Activated T-helper 1 cell treated with anti-CD3 and anti-CD28 coated beads, Interleukin-12 subunit alpha, Interleukin-12 subunit beta, Interleukin-2, Interleukin-4 antibody, amounts not matched to agents 30 ng/mL and 10 ng/mL and 1 ng/mL, durations not matched to agents 14 hours and 24 hours and 36 hours (primary cell): ENCODE measurements at regions of chr9 and their contacts with region 1.

Region 1: DNA sequence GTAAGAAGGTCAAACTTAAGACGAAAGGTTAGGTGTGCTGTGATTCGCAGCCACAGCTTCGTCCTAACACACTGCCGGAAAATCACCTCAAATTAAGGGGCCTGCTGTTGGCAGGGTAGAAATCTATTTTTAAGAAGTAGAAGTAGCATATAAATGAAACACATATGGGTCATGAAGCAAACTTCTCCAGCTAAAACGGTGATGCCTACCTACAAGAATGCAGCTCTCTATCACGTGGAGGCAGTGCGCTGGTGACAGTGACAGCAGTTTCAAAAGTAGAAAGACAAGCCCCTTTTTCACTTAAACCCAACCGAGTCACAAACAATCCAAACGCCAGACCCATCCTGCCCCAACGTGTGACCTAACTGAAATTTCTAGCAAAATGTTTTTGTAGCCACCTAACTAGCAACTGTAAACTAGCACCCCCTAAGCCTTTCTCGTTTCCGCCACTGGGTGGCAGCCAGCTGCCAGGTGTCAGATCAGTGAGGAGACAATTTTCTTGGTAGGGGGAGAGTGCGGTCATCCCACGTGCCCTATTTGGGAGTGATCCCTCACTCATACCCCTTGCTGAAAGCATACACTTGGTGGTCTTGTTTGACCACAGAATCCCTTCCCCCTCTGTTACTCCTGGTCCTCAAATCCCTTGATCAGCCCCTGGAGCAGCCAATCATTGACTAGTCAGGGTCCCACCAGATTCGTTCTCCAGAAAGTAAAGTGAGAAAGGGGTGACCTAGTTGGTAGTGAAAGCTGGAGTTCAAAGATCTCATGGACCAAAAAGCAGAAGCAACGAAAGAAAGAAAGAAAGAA is 71.8 kb upstream of the MAMDC2 start:
- DNase-seq: peak; percentile 15
- H3K4me3 Mint-ChIP-seq: no peak overlapping the region
- H3K27ac Mint-ChIP-seq: no peak overlapping the region
- H3K4me1 Mint-ChIP-seq: no peaks in the 10 kb centered on the region
- H3K27me3 Mint-ChIP-seq: peaks cover 4% of the 10 kb centered on the region

Region 2: DNA sequence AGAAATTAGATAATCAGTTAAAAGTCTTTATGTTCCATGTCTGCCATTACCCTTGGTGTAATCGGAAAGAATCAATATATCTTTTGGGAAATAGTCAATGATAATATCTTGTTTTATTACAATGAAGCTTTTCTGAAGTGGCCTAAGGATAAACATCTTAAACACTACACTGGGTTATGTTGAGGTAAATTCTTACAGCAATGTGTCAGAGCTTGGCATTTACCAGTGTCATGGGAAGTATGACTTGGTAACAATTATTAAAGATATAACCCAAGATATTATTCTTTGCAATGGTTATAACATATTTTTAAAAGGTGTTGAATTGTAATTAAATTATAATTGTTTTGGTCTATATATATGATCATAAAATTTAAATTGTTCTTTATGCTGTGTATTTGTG is 66.6 kb before region 1 on chr9:
- intact Hi-C with region 1: no loop called
- DNase-seq: no peak
- H3K4me3 Mint-ChIP-seq: no peak overlapping the region
- H3K27ac Mint-ChIP-seq: no peak overlapping the region
- H3K4me1 Mint-ChIP-seq: no peaks in the 10 kb centered on the region
- H3K27me3 Mint-ChIP-seq: peaks cover 6% of the 10 kb centered on the region

Region 3: DNA sequence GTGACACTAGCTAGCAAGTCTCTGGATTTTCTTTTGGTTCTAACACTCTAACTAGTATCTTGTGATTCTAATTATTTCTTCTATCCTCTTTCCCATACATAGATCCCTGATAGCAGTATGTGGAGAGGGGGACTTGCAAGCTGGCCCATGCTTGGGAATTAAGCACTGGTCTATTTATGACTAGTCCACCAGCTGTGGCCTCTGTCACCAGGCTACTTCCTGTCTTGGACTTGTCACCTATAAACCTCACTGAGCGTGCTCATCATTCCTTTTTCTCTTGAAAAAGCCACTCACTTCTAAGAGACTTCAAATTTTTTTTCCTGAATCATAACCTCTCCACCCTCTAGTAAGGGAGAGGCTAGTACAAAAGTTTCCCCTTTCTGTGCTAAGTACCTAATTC is 39.5 kb after region 1 on chr9:
- intact Hi-C with region 1: loop called (anchors 1 kb)
- DNase-seq: no peak
- H3K4me3 Mint-ChIP-seq: no peak overlapping the region
- H3K27ac Mint-ChIP-seq: no peak overlapping the region
- H3K4me1 Mint-ChIP-seq: no peaks in the 10 kb centered on the region
- H3K27me3 Mint-ChIP-seq: peaks cover 3% of the 10 kb centered on the region

Region 4: GRCh38 chr9:70085241-70085640 is 113.4 kb after region 1 on chr9:
- intact Hi-C with region 1: no loop called
- DNase-seq: no peak
- H3K4me3 Mint-ChIP-seq: no peak overlapping the region
- H3K27ac Mint-ChIP-seq: no peak overlapping the region
- H3K4me1 Mint-ChIP-seq: no peaks in the 10 kb centered on the region
- H3K27me3 Mint-ChIP-seq: peaks cover 2% of the 10 kb centered on the region

Region 5: GRCh38 chr9:70111042-70111602 is 139.3 kb after region 1 on chr9:
- intact Hi-C with region 1: loop called (anchors 1 kb)
- DNase-seq: no peak
- H3K4me3 Mint-ChIP-seq: no peak overlapping the region
- H3K27ac Mint-ChIP-seq: no peak overlapping the region
- H3K4me1 Mint-ChIP-seq: peaks cover 15% of the 10 kb centered on the region
- H3K27me3 Mint-ChIP-seq: peaks cover 7% of the 10 kb centered on the region

Region 6: DNA sequence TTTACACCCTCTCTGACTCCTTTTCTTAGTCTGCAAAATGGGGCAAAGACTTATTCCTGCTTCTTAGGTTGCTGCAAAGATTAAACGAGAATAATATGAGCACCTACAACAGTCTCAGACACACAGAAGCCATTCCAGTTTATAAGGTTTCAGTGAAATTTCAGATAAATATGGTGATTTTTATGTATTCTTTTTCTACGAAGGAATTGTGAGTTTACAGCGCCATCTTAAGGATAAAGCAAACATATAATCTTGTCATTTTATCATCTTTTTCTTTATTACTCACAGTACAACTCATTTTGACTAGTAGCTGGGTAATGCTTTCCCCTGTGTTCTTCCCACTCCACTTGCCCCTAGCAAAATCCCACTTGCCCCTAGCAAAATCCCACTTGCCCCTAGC is 257.7 kb after region 1 on chr9:
- intact Hi-C with region 1: loop called (anchors 10 kb)
- DNase-seq: no peak
- H3K4me3 Mint-ChIP-seq: no peak overlapping the region
- H3K27ac Mint-ChIP-seq: no peak overlapping the region
- H3K4me1 Mint-ChIP-seq: no peaks in the 10 kb centered on the region
- H3K27me3 Mint-ChIP-seq: peaks cover 3% of the 10 kb centered on the region